ENCODE measurements at regions of chr21 and their contacts with region 1.

Region 1: GRCh38 chr21:34707876-34708325 is 39.1 kb downstream of the CLIC6 start:
- DNase-seq: peak; percentile 28
- H3K4me3 Mint-ChIP-seq: peak overlapping the region; percentile 48
- H3K27ac Mint-ChIP-seq: no peak overlapping the region
- H3K4me1 Mint-ChIP-seq: peaks cover 24% of the 10 kb centered on the region
- H3K27me3 Mint-ChIP-seq: peaks cover 16% of the 10 kb centered on the region

Region 2: GRCh38 chr21:34737107-34737506 is 29.2 kb after region 1 on chr21:
- intact Hi-C with region 1: no loop called
- DNase-seq: no peak
- H3K4me3 Mint-ChIP-seq: no peak overlapping the region
- H3K27ac Mint-ChIP-seq: no peak overlapping the region
- H3K4me1 Mint-ChIP-seq: no peaks in the 10 kb centered on the region
- H3K27me3 Mint-ChIP-seq: peaks cover 11% of the 10 kb centered on the region

Region 3: DNA sequence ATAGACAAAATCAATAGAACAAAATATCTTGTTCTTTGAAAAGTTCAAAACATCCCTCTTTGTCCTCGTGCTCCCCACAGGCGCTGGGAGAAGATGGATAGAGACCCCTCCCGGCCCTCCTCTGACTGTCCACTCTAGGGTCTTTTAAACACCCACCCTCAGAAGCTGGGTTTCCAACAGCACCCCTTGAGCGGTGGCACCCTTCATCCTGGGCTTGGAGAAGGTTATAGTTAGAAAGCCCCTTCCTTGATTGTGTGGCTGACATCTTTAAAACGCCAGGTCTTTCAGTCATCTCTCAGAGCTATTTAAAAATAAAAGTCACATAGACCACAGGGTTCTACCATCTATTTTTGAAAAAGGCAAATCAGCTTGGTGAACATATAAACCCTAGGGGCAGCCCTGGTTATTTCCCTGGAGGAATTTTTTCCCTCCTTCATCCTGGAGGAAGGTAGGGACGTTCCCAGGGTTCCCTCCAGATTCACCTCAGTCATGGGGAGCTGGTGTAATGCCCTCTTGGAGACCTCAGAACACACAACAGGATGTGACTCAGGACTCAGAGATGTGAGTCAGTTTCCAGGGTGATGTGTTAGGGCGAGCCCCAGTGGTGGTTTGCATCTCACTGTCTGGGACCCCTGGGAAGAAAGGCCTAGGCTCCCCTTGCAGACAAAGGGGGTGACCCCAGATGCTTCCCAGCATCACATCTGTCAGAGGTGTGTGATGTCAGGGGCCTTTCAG is 99.4 kb after region 1 on chr21:
- intact Hi-C with region 1: loop called (anchors 5 kb)
- DNase-seq: peak; percentile 54
- H3K4me3 Mint-ChIP-seq: peak overlapping the region; percentile 56
- H3K27ac Mint-ChIP-seq: peak overlapping the region; percentile 93
- H3K4me1 Mint-ChIP-seq: peaks cover 92% of the 10 kb centered on the region
- H3K27me3 Mint-ChIP-seq: no peaks in the 10 kb centered on the region

Region 4: GRCh38 chr21:34845521-34846451 is 137.9 kb after region 1 on chr21:
- intact Hi-C with region 1: loop called (anchors 5 kb)
- DNase-seq: peak; percentile 45
- H3K4me3 Mint-ChIP-seq: peak overlapping the region; percentile 64
- H3K27ac Mint-ChIP-seq: peak overlapping the region; percentile 77
- H3K4me1 Mint-ChIP-seq: peaks cover 44% of the 10 kb centered on the region
- H3K27me3 Mint-ChIP-seq: no peaks in the 10 kb centered on the region